MCF 10A (cell line): ENCODE measurements at regions of chr20 and their contacts with region 1.

Region 1: DNA sequence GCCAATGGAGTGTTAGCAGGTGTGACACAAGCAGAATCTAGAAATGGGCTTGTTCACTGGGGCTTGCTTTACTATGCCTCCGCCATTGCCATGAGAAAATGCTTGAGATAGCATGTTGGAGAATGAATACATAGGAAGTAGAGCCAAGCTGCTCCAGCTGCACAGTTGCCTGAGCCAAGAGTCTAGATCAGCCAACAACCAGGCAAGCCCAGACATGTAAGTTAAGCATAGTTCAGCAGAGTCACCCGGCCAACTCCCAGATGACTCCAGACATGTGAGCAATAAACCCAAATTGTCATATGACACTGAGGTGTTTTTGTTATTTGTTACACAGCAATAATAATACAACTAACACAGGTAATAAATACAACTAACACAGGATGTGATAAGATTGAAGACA is 167.9 kb downstream of the HAO1 start:
- DNase-seq: peak; percentile 84
- H3K4me3 Mint-ChIP-seq: no peak overlapping the region
- H3K27ac Mint-ChIP-seq: peak overlapping the region; percentile 76
- H3K4me1 Mint-ChIP-seq: peaks cover 28% of the 10 kb centered on the region
- H3K27me3 Mint-ChIP-seq: no peaks in the 10 kb centered on the region
- CTCF ChIP-seq: no peak

Region 2: DNA sequence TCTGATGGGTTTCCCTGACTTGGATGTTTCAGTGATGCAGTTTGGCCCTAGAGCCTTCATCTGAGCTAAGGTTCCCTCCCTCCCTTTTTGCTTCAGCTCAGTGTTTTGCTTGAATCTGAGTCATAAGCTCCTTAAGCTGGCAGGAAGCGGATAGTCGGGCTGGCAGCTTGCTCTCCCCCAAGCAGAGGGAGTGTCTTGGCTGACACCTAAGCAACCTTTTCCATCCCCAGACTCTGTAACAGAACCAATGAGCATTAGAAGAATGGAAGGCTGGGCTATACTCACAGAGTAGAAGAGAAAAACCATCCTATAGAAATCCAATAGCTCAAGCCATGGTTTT is 69.6 kb after region 1 on chr20:
- CTCF ChIA-PET with region 1: interaction called, 3 read pairs
- POLR2A ChIA-PET with region 1: interaction called, 5 read pairs
- intact Hi-C with region 1: loop called (anchors 2 kb)
- DNase-seq: peak; percentile 95
- H3K4me3 Mint-ChIP-seq: no peak overlapping the region
- H3K27ac Mint-ChIP-seq: peak overlapping the region; percentile 90
- H3K4me1 Mint-ChIP-seq: peaks cover 32% of the 10 kb centered on the region
- H3K27me3 Mint-ChIP-seq: no peaks in the 10 kb centered on the region
- CTCF ChIP-seq: no peak

Region 3: DNA sequence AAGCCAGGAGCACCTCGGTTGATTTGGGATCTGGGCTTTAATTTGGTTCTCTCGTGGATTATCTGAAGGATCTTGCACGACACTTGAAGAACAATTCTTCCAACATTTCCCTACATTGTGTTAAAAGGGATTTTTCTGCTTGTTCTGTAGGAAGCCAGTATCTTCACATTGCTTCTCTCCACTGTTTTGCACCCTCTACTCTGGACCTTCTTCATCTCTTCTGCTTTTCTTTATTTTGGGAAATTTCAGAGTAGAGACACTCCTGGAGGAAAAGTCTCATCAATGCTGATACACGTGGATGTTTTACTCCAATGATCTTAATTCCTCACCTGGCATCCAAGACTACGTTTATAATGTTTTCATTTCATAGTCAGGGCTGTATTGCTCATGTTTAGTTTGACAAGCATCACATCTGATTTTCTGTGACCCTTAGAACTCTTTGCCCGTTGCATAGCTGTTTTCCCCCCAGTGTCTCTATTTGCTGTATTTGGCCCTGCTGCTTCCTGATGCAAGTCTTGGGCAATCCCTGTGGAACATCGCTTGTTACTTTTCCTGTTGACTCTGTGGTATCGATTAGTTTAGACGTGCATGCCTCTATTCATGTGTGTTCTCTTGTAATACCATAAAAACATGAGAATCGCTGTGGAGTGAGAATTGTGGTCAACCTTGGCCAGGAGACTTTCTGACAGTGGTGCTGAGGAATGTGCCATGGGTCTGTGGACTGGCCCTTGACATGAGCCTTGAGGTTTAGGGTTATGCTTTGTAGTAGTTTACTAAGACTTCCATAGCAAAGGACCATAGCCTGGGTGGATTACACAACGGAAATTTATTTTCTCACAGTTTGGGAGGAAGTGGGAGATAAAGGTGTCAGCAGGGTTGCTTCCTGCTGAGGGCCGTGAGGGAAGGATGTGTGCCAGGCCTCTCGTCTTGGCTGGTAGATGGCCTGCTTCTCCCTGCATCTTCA is 372.2 kb after region 1 on chr20:
- CTCF ChIA-PET with region 1: no interaction called
- POLR2A ChIA-PET with region 1: no interaction called
- intact Hi-C with region 1: no loop called
- DNase-seq: peak; percentile 62
- H3K4me3 Mint-ChIP-seq: no peak overlapping the region
- H3K27ac Mint-ChIP-seq: peak overlapping the region; percentile 36
- H3K4me1 Mint-ChIP-seq: peaks cover 20% of the 10 kb centered on the region
- H3K27me3 Mint-ChIP-seq: no peaks in the 10 kb centered on the region
- CTCF ChIP-seq: no peak